ENCODE measurements at regions of chr19 and their contacts with region 1.

Region 1: GRCh38 chr19:47075179-47075810 is 26.9 kb upstream of the TMEM160 start:
- DNase-seq: no peak
- H3K4me3 ChIP-seq: no peak overlapping the region
- H3K27ac ChIP-seq: no peak overlapping the region
- H3K4me1 ChIP-seq: no peaks in the 10 kb centered on the region
- H3K27me3 ChIP-seq: no peaks in the 10 kb centered on the region
- CTCF ChIP-seq: no peak
- POLR2A ChIP-seq: no peak

Region 2: GRCh38 chr19:47002107-47002766 is 73.1 kb before region 1 on chr19:
- CTCF ChIA-PET with region 1: no interaction called
- POLR2A ChIA-PET with region 1: no interaction called
- dilution Hi-C with region 1: no loop called
- intact Hi-C with region 1: no loop called
- DNase-seq: no peak
- H3K4me3 ChIP-seq: no peak overlapping the region
- H3K27ac ChIP-seq: no peak overlapping the region
- H3K4me1 ChIP-seq: no peaks in the 10 kb centered on the region
- H3K27me3 ChIP-seq: peaks cover 0 to 5% of the 10 kb centered on the region in 2 experiments
- CTCF ChIP-seq: no peak
- POLR2A ChIP-seq: no peak

Region 3: DNA sequence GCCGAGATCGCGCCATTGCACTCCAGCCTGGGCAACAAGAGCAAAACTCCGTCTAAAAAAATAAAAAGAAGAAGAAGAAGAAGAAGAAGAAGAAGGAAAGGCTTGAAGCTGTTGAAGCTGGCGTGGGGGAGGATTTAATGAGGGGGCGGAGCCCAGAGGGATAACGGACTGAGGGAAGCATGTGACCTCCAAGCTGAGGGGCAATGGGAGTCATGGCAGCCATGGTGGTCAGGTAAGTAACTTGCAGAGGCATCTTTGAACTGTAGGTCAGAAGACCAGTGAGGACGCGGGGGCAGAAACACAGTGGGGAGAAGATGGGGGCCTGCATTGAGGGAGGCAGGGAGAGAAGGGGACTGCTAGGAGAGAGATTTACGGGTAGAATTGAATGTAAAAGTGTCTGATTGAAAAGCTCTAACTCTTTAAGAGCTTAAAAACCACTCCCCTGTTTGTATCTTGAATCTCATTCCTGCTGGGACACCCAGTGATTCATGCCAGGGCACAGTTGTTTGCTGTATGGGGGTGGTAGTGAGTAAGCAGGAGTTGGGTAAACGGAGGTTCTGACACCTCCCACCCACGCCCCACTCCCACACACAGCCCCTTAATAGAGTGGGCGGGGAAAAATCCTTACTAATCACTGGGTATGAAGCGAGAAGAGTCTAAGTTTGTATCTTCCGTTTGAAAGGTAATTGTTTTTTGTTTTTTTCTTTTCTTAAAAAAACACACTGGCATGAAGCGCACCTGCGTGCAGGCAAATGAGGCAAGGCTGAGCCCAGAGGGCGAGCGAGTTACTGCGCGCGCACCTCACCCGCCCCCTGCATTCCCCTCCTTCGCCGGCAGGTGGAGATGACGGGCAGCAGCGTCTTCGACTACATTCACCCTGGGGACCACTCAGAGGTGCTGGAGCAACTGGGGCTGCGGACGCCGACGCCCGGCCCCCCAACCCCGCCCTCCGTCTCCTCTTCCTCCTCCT is 39.9 kb before region 1 on chr19:
- CTCF ChIA-PET with region 1: interaction called, 5 read pairs
- POLR2A ChIA-PET with region 1: no interaction called
- dilution Hi-C with region 1: no loop called
- intact Hi-C with region 1: loop called (anchors 5 kb)
- DNase-seq: peak; percentile 92
- H3K4me3 ChIP-seq: peak overlapping the region; percentile 32 to 75 (median 73)
- H3K27ac ChIP-seq: no peak overlapping the region
- H3K4me1 ChIP-seq: peaks cover 8% of the 10 kb centered on the region
- H3K27me3 ChIP-seq: peaks cover 0 to 2% of the 10 kb centered on the region in 2 experiments
- CTCF ChIP-seq: peak; percentile 84 to 94
- POLR2A ChIP-seq: no peak

Region 4: GRCh38 chr19:47094557-47095475 is 19.5 kb after region 1 on chr19:
- CTCF ChIA-PET with region 1: interaction called, 20 read pairs
- POLR2A ChIA-PET with region 1: no interaction called
- dilution Hi-C with region 1: no loop called
- intact Hi-C with region 1: no loop called
- DNase-seq: no peak
- H3K4me3 ChIP-seq: no peak overlapping the region
- H3K27ac ChIP-seq: no peak overlapping the region
- H3K4me1 ChIP-seq: no peaks in the 10 kb centered on the region
- H3K27me3 ChIP-seq: no peaks in the 10 kb centered on the region
- CTCF ChIP-seq: no peak
- POLR2A ChIP-seq: no peak

Region 5: DNA sequence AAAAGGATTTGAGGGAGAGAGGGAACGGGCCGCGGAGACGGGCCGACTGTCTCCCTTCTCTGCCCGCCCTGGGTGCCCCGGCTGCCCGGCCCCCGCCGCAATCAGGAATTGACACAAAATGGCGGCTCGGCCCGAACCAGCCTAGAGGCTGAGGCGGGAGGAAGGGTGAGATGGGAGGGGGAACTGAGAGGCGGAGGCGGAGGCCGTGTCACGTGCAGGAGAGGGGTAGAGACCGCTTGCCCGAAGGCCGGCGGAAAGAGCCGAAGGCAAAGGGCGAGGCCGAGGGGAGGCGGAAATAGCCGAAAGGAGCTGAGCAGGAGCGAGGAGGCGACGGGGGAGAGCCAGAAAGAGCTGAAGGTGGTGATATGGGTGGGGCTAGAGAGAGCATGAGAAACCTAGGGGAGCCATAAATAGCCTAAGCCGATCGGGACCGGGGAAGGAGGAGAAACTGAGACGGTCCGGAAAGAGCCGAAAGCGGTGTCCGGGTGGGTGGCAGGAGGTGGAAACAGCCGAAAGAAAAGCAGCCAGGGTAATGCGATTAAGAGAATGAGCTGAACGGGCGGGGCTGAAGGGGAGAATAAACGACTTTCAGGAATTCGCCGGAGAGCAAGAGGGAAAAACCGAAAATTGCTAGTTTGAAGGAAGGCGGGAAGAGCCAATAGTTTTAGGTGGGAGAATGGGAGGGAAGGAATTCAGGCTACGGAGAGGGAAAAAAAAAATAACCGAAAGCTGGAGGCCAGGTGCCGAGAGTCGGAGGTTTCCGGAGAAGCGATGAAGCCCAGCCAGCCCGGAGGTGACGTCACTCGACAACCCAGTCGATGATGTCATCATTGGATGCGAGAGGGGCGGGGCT is 37.9 kb after region 1 on chr19 and contains the start of gene ZC3H4:
- CTCF ChIA-PET with region 1: interaction called, 26 read pairs
- POLR2A ChIA-PET with region 1: interaction called, 9 read pairs
- dilution Hi-C with region 1: no loop called
- intact Hi-C with region 1: loop called (anchors 1 kb)
- DNase-seq: peak; percentile 100
- H3K4me3 ChIP-seq: peak within 1 kb of the TSS; percentile 79 to 94 (median 80)
- H3K27ac ChIP-seq: peak within 1 kb of the TSS; percentile 92
- H3K4me1 ChIP-seq: peaks cover 23% of the 10 kb centered on the region
- H3K27me3 ChIP-seq: no peaks in the 10 kb centered on the region
- CTCF ChIP-seq: no peak
- POLR2A ChIP-seq: peak; percentile 89
- total RNA-seq, gene ZC3H4: 56.4 and 63.9 TPM in 2 replicates

Region 6: GRCh38 chr19:47130591-47131227 is 55.4 kb after region 1 on chr19 and contains the start of gene SAE1:
- CTCF ChIA-PET with region 1: interaction called, 110 read pairs
- POLR2A ChIA-PET with region 1: no interaction called
- dilution Hi-C with region 1: no loop called
- intact Hi-C with region 1: loop called (anchors 1 kb)
- DNase-seq: peak; percentile 99
- H3K4me3 ChIP-seq: peak within 1 kb of the TSS; percentile 76 to 93 (median 82)
- H3K27ac ChIP-seq: peak within 1 kb of the TSS; percentile 78
- H3K4me1 ChIP-seq: peaks cover 30% of the 10 kb centered on the region
- H3K27me3 ChIP-seq: no peaks in the 10 kb centered on the region
- CTCF ChIP-seq: peak; percentile 39 to 64
- POLR2A ChIP-seq: peak; percentile 75
- total RNA-seq, gene SAE1: 219 and 223 TPM in 2 replicates

Measured in endothelial cell of umbilical vein (primary cell).